K562 (cell line): ENCODE measurements at regions of chr9 and their contacts with region 1.

Region 1: GRCh38 chr9:119556129-119556875 is 187.1 kb upstream of the BRINP1 start:
- DNase-seq: peak; percentile 46 to 53 (median 50)
- ATAC-seq: peak; percentile 84
- H3K4me3 ChIP-seq: no peak overlapping the region
- H3K27ac ChIP-seq: no peak overlapping the region
- H3K4me1 ChIP-seq: no peaks in the 10 kb centered on the region
- H3K27me3 ChIP-seq: no peaks in the 10 kb centered on the region
- CTCF ChIP-seq: peak; percentile 57 to 70 (median 58)
- EP300 ChIP-seq: no peak
- POLR2A ChIP-seq: no peak
- RAD21 ChIP-seq: peak; percentile 29 to 58; a peak in 2 of 4 replicates

Region 2: GRCh38 chr9:119240546-119240945 is 315.8 kb before region 1 on chr9:
- CTCF ChIA-PET with region 1: no interaction called
- POLR2A ChIA-PET with region 1: no interaction called
- in situ Hi-C with region 1: no loop called
- intact Hi-C with region 1: no loop called
- DNase-seq: no peak
- ATAC-seq: no peak
- H3K4me3 ChIP-seq: no peak overlapping the region
- H3K27ac ChIP-seq: no peak overlapping the region
- H3K4me1 ChIP-seq: no peaks in the 10 kb centered on the region
- H3K27me3 ChIP-seq: no peaks in the 10 kb centered on the region
- CTCF ChIP-seq: no peak
- EP300 ChIP-seq: no peak
- POLR2A ChIP-seq: no peak
- RAD21 ChIP-seq: no peak

Region 3: DNA sequence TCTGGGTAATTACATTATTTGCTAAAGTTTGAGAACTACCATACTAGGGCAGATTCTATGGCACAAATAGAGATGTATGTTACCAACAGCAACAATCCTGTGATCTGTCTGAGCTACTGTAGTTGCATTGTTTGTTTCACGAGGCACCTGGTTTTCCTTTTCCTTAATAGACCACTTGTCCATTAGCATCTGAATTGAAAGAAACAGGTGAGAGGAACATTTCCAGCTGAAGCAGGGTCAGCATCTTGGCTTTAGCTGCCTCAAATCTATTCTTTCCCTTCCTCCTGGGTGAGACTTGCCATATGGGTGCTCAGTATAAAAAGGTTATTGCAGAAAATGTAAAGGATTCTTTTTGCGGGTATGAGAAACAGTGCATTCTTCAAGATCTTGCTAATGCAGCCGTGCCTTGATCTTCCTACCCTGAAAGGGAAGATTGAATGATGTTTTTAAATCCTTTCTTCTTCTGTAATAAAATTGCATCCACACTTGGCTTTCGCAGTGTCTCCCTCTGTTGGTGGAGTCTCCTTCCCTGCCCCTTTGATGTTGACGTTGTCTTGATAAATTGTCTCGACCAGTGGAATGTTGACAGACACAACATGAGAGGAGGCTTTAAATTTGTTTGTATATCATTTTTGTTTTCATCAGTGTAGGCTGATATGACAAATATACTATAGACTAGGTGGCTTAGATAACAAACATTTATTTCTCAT is 69.0 kb before region 1 on chr9:
- CTCF ChIA-PET with region 1: no interaction called
- POLR2A ChIA-PET with region 1: no interaction called
- in situ Hi-C with region 1: no loop called
- intact Hi-C with region 1: no loop called
- DNase-seq: no peak
- ATAC-seq: no peak
- H3K4me3 ChIP-seq: no peak overlapping the region
- H3K27ac ChIP-seq: no peak overlapping the region
- H3K4me1 ChIP-seq: no peaks in the 10 kb centered on the region
- H3K27me3 ChIP-seq: no peaks in the 10 kb centered on the region
- CTCF ChIP-seq: no peak
- EP300 ChIP-seq: no peak
- POLR2A ChIP-seq: no peak
- RAD21 ChIP-seq: no peak

Region 4: GRCh38 chr9:119509291-119509905 is 46.9 kb before region 1 on chr9:
- CTCF ChIA-PET with region 1: no interaction called
- POLR2A ChIA-PET with region 1: no interaction called
- in situ Hi-C with region 1: no loop called
- intact Hi-C with region 1: no loop called
- DNase-seq: no peak
- ATAC-seq: no peak
- H3K4me3 ChIP-seq: no peak overlapping the region
- H3K27ac ChIP-seq: no peak overlapping the region
- H3K4me1 ChIP-seq: no peaks in the 10 kb centered on the region
- H3K27me3 ChIP-seq: no peaks in the 10 kb centered on the region
- CTCF ChIP-seq: no peak
- EP300 ChIP-seq: no peak
- POLR2A ChIP-seq: no peak
- RAD21 ChIP-seq: no peak

Region 5: GRCh38 chr9:119667163-119667562 is 110.9 kb after region 1 on chr9:
- CTCF ChIA-PET with region 1: no interaction called
- POLR2A ChIA-PET with region 1: no interaction called
- in situ Hi-C with region 1: no loop called
- intact Hi-C with region 1: no loop called
- DNase-seq: no peak
- ATAC-seq: no peak
- H3K4me3 ChIP-seq: no peak overlapping the region
- H3K27ac ChIP-seq: no peak overlapping the region
- H3K4me1 ChIP-seq: no peaks in the 10 kb centered on the region
- H3K27me3 ChIP-seq: no peaks in the 10 kb centered on the region
- CTCF ChIP-seq: no peak
- EP300 ChIP-seq: no peak
- POLR2A ChIP-seq: no peak
- RAD21 ChIP-seq: no peak

Region 6: DNA sequence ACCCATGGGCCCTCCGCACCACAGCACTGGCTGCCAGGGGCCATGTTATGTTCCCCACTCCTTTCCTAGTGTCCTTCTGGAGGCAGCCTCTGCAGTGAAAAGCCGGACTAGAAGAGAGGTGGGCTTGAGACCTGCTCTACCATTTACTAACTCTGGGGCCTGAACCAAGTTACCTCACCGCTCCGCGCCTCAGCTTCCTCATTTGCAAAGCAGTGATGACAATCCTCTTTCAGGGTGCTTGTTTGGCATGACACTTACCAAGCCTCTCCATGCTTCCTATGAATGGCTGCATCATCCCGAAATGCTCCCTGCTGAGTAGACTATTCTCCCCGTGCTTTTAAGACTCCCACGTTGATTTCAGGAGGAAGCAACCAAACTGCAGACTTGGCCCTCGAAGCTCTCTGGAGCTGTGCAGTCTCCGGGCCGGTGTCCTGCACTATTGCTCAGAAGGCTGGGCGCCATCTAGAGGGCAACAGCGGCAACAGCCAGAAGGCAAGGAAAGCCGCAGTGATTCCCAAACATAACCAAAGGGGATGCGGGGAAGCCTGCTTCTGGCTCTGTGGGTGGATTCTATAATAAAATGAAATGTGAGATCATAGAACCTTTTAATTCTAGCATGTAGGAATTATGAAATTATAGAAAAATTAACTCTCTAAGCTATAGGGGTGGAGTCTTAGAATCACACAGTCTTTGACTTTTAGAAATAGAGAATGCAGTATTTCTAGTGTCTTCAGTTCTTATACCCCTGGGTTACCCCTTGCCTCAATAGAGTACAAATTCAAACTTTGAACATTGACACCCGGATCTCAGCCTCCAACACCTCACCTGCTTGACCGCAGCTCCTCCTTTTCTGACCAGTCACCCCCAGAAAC is 412.8 kb after region 1 on chr9:
- CTCF ChIA-PET with region 1: interaction called, 3 read pairs
- POLR2A ChIA-PET with region 1: no interaction called
- in situ Hi-C with region 1: no loop called
- intact Hi-C with region 1: loop called (anchors 10 kb)
- DNase-seq: peak; percentile 66 to 73 (median 70)
- ATAC-seq: peak; percentile 99
- H3K4me3 ChIP-seq: no peak overlapping the region
- H3K27ac ChIP-seq: no peak overlapping the region
- H3K4me1 ChIP-seq: no peaks in the 10 kb centered on the region
- H3K27me3 ChIP-seq: no peaks in the 10 kb centered on the region
- CTCF ChIP-seq: peak; percentile 74 to 78 (median 75)
- EP300 ChIP-seq: no peak
- POLR2A ChIP-seq: no peak
- RAD21 ChIP-seq: peak; percentile 46 to 63

Region 7: GRCh38 chr9:120348951-120349429 is 792.7 kb after region 1 on chr9:
- CTCF ChIA-PET with region 1: no interaction called
- POLR2A ChIA-PET with region 1: no interaction called
- in situ Hi-C with region 1: no loop called
- intact Hi-C with region 1: loop called (anchors 10 kb)
- DNase-seq: peak; percentile 42 to 72 (median 59)
- ATAC-seq: peak; percentile 94
- H3K4me3 ChIP-seq: no peak overlapping the region
- H3K27ac ChIP-seq: no peak overlapping the region
- H3K4me1 ChIP-seq: no peaks in the 10 kb centered on the region
- H3K27me3 ChIP-seq: peaks cover 0 to 13% of the 10 kb centered on the region in 2 experiments; a peak in 1 of 5 replicates
- CTCF ChIP-seq: peak; percentile 62 to 72 (median 69)
- EP300 ChIP-seq: no peak
- POLR2A ChIP-seq: no peak
- RAD21 ChIP-seq: peak; percentile 58 to 76